Natural killer cell (primary cell): ENCODE measurements at regions of chr16 and their contacts with region 1.

Region 1: DNA sequence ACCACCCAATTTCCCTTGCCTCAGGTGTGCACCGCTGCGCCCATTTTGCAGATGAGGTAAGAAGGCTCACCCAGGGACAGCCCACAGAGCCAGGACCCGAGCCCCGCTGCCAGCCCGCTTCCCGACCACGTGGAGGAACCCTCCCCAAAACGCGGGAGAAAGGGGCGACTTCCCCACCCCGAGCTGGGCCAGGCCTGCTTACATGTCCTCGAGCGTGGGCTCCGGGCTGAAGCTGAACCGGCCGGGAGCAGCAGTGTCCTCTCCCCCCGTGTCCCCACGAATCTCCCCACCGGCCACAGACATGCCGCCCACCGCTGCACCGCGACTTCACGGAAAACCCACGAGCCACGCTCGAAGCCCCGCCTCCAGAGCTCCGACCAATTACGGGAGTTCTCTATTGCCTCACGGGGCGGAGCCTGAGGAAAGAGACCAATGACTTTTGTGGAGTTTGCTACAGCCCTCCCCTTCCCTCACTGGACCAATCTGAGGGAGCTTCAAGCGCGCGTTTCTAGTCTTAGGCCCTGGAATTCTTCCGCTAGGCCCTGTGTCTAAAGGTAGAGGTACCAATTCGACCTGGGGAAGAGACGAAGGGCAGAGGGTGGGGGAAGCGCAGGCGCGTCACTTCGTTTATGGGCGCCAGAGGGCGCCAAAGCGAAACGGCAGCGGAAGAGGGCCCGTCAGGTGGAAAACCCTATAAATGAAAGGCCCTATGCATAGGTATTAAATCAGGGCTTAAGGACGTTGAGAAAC is at the start of gene DCTPP1:
- DNase-seq: peak; percentile 92 to 99
- ATAC-seq: peak; percentile 94 to 99 (median 95)
- H3K4me3 ChIP-seq: peak within 1 kb of the TSS; percentile 67
- H3K4me3 Mint-ChIP-seq: peak within 1 kb of the TSS; percentile 21
- H3K27ac ChIP-seq: peak within 1 kb of the TSS; percentile 70
- H3K27ac Mint-ChIP-seq: no peak within 1 kb of the TSS
- H3K4me1 ChIP-seq: peaks cover 21% of the 10 kb centered on the region
- H3K4me1 Mint-ChIP-seq: peaks cover 0 to 6% of the 10 kb centered on the region in 2 donors
- H3K27me3 ChIP-seq: no peaks in the 10 kb centered on the region
- H3K27me3 Mint-ChIP-seq: no peaks in the 10 kb centered on the region
- CTCF ChIP-seq: peak; percentile 71
- total RNA-seq, gene DCTPP1: 11.2 to 16.9 (median 15.2) TPM

Region 2: DNA sequence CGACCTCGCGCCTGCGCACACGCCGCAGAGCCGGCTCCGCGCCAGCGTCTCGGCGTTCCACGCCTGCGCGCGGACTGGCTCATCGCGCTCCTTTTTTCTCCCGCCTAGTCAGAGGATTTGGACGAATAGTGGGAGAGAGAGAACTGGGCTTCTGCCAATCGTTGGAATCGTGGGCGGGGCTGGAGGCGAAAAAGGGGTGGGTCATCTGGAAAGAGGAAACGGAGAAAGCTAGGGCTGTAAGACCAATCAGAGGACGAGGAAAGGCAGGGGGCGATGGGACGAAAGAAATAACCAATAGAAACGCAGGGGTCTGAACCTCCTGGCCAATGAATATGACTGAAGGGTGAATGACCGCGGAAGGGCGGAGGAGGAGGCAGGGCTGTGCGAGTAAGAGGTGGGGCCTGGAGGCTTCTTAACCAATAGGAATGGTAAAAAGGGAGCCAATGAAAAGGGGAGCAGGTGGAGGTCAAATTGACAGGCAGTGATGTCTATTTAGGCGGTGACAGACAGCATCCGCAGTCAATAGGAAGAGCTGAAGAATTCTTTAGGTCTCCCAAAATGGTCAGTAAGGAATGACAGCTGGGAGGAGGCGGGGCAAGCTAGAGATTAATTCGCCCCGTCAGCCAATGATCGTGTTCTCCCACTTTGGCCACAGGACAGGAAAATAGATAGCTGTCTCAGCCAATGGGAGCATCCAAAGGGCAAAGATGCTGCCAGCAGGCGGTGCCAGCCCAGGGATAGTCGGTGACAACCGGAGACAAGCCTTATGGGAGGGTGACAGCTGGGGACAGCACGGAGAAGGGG is 59.2 kb before region 1 on chr16 and contains the start of gene TBC1D10B:
- intact Hi-C with region 1: loop called (anchors 2 kb)
- DNase-seq: peak; percentile 96 to 99
- ATAC-seq: peak; percentile 82 to 94 (median 82)
- H3K4me3 ChIP-seq: peak within 1 kb of the TSS; percentile 64
- H3K4me3 Mint-ChIP-seq: peak within 1 kb of the TSS; percentile 93
- H3K27ac ChIP-seq: peak within 1 kb of the TSS; percentile 70
- H3K27ac Mint-ChIP-seq: peak within 1 kb of the TSS; percentile 91 to 94
- H3K4me1 ChIP-seq: peaks cover 35% of the 10 kb centered on the region
- H3K4me1 Mint-ChIP-seq: peaks cover 48 to 59% of the 10 kb centered on the region in 2 donors
- H3K27me3 ChIP-seq: no peaks in the 10 kb centered on the region
- H3K27me3 Mint-ChIP-seq: peaks cover 0 to 3% of the 10 kb centered on the region in 2 donors
- CTCF ChIP-seq: no peak
- total RNA-seq, gene TBC1D10B: 43.0 to 55.3 (median 50.2) TPM

Region 3: GRCh38 chr16:30445408-30446202 is 15.8 kb after region 1 on chr16 and contains the start of gene SEPHS2:
- intact Hi-C with region 1: loop called (anchors 1 kb)
- DNase-seq: peak; percentile 94 to 97
- ATAC-seq: peak; percentile 86 to 91 (median 90)
- H3K4me3 ChIP-seq: peak within 1 kb of the TSS; percentile 87
- H3K4me3 Mint-ChIP-seq: peak within 1 kb of the TSS; percentile 96
- H3K27ac ChIP-seq: peak within 1 kb of the TSS; percentile 91
- H3K27ac Mint-ChIP-seq: peak within 1 kb of the TSS; percentile 94 to 95
- H3K4me1 ChIP-seq: peaks cover 44% of the 10 kb centered on the region
- H3K4me1 Mint-ChIP-seq: peaks cover 36 to 38% of the 10 kb centered on the region in 2 donors
- H3K27me3 ChIP-seq: no peaks in the 10 kb centered on the region
- H3K27me3 Mint-ChIP-seq: no peaks in the 10 kb centered on the region
- CTCF ChIP-seq: peak; percentile 34
- total RNA-seq, gene SEPHS2: 25.5 to 37.6 (median 35.0) TPM

Region 4: GRCh38 chr16:30458561-30459394 is 28.9 kb after region 1 on chr16:
- intact Hi-C with region 1: no loop called
- DNase-seq: peak; percentile 71 to 92
- ATAC-seq: peak; percentile 90 to 94 (median 91)
- H3K4me3 ChIP-seq: no peak overlapping the region
- H3K4me3 Mint-ChIP-seq: peak overlapping the region; percentile 49
- H3K27ac ChIP-seq: peak overlapping the region; percentile 73
- H3K27ac Mint-ChIP-seq: peak overlapping the region; percentile 85
- H3K4me1 ChIP-seq: peaks cover 40% of the 10 kb centered on the region
- H3K4me1 Mint-ChIP-seq: peaks cover 34 to 50% of the 10 kb centered on the region in 2 donors
- H3K27me3 ChIP-seq: no peaks in the 10 kb centered on the region
- H3K27me3 Mint-ChIP-seq: no peaks in the 10 kb centered on the region
- CTCF ChIP-seq: no peak

Region 5: GRCh38 chr16:30472328-30472942 is 42.6 kb after region 1 on chr16 and contains the start of gene ITGAL:
- intact Hi-C with region 1: loop called (anchors 1 kb)
- DNase-seq: peak; percentile 77 to 93
- ATAC-seq: peak; percentile 75 to 90 (median 86)
- H3K4me3 ChIP-seq: peak within 1 kb of the TSS; percentile 53
- H3K4me3 Mint-ChIP-seq: peak within 1 kb of the TSS; percentile 98
- H3K27ac ChIP-seq: peak within 1 kb of the TSS; percentile 88
- H3K27ac Mint-ChIP-seq: peak within 1 kb of the TSS; percentile 95 to 96
- H3K4me1 ChIP-seq: peaks cover 79% of the 10 kb centered on the region
- H3K4me1 Mint-ChIP-seq: peaks cover 54 to 64% of the 10 kb centered on the region in 2 donors
- H3K27me3 ChIP-seq: no peaks in the 10 kb centered on the region
- H3K27me3 Mint-ChIP-seq: no peaks in the 10 kb centered on the region
- CTCF ChIP-seq: no peak
- total RNA-seq, gene ITGAL: 1,131 to 1,260 (median 1,176) TPM

Region 6: GRCh38 chr16:30534368-30535105 is 104.7 kb after region 1 on chr16 and contains the start of gene ZNF747:
- intact Hi-C with region 1: loop called (anchors 10 kb)
- DNase-seq: peak; percentile 86 to 96
- ATAC-seq: peak; percentile 86 to 93 (median 89)
- H3K4me3 ChIP-seq: peak within 1 kb of the TSS; percentile 87
- H3K4me3 Mint-ChIP-seq: peak within 1 kb of the TSS; percentile 96
- H3K27ac ChIP-seq: peak within 1 kb of the TSS; percentile 94
- H3K27ac Mint-ChIP-seq: peak within 1 kb of the TSS; percentile 83 to 95
- H3K4me1 ChIP-seq: peaks cover 38% of the 10 kb centered on the region
- H3K4me1 Mint-ChIP-seq: peaks cover 22 to 30% of the 10 kb centered on the region in 2 donors
- H3K27me3 ChIP-seq: no peaks in the 10 kb centered on the region
- H3K27me3 Mint-ChIP-seq: no peaks in the 10 kb centered on the region
- CTCF ChIP-seq: no peak
- total RNA-seq, gene ZNF747: 5.0 to 8.6 (median 6.3) TPM

Region 7: DNA sequence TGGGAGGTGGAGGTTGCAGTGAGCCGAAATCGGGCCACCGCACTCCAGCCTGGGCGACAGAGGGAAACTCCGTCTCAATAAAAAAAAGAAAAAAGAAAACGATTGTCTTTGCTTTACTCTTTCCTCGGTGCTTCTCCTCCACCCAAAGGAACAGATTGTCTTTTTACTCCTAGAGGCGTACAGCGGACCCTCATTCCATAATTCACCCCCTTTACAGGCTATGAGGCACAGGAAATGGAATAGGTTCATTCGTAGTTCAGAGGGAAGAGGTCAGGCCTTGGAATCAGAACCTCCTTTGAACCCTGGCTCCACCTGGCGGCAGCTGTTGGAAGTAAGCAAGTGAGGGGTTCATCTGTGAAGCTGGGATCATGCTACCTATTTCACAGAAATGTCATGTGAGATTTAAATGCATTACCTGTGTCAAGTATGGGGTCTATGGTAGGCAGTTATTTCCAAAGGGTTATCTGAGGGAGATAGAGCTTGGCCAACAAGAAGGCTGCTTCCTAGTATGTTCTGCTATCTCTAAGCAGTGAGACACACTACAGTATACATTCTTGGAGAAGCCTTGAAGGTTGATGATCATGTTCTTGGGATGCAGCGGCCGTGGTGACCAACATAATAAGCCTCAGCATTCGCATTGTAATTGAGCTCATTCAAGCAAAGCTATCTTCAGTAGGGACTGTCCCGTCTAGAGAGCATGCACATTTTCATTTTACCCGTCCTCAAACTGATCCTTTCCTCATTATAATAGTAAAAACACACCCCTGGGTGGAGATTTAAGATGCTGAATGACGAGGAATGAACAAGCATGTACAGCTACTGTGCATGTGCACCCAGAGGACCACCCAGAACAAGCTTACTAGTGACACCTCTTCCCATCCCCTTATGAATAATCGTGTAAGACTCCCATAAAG is 199.0 kb after region 1 on chr16:
- intact Hi-C with region 1: loop called (anchors 1 kb)
- DNase-seq: peak; percentile 84 to 89
- ATAC-seq: peak; percentile 91 to 98 (median 92)
- H3K4me3 ChIP-seq: no peak overlapping the region
- H3K4me3 Mint-ChIP-seq: peak overlapping the region; percentile 74
- H3K27ac ChIP-seq: no peak overlapping the region
- H3K27ac Mint-ChIP-seq: peak overlapping the region in 1 of 2 donors; percentile 76
- H3K4me1 ChIP-seq: peaks cover 9% of the 10 kb centered on the region
- H3K4me1 Mint-ChIP-seq: peaks cover 7% of the 10 kb centered on the region in 2 donors
- H3K27me3 ChIP-seq: no peaks in the 10 kb centered on the region
- H3K27me3 Mint-ChIP-seq: peaks cover 0 to 1% of the 10 kb centered on the region in 2 donors
- CTCF ChIP-seq: peak; percentile 95